ENCODE measurements at regions of chr2 and their contacts with region 1.

Region 1: DNA sequence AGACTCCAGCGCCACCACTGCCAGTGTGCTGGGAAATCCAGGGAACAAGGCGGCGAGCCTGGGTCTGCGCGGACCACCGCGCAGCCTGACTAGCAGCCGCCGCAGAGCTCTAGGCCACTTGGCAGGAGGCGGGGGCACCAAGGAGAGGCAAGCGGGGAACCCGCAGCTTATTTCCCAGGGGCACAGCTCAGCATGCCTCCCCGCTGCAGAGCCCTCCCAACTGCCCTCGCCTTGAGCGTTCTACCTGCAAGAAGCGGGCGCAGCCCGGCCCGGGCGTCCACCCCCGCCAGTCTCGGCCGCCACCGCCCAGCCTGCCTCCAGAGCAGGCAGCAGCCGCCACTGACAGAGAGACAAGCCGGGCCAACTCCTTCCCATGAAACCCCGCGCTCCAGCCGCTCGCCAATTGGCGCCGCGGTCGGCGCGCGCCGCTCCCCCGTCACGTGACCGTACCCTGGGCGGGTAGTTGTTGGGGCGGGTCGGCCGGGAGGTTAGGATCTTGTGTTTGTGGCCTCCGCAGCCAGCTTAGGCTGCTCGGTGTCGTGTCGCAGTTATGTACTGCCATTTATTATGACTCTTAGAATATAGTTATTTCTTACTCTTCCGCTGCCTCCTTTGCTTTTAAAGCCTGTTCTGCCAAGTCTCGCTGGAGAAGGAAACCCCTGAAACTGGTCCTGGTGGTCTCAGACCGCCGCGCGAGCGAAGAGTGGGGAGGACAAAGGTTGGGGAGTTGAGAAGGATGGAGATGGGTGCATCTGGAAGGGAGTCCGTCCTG is at the start of gene LNPK:
- DNase-seq: peak; percentile 91
- H3K4me3 ChIP-seq: peak within 1 kb of the TSS; percentile 58 to 83 (median 79)
- H3K27ac ChIP-seq: peak within 1 kb of the TSS; percentile 10
- H3K4me1 ChIP-seq: peaks cover 17% of the 10 kb centered on the region
- H3K27me3 ChIP-seq: peaks cover 0 to 2% of the 10 kb centered on the region in 2 experiments
- CTCF ChIP-seq: no peak
- POLR2A ChIP-seq: peak; percentile 96
- total RNA-seq, gene LNPK: 11.2 and 11.8 TPM in 2 replicates

Region 2: DNA sequence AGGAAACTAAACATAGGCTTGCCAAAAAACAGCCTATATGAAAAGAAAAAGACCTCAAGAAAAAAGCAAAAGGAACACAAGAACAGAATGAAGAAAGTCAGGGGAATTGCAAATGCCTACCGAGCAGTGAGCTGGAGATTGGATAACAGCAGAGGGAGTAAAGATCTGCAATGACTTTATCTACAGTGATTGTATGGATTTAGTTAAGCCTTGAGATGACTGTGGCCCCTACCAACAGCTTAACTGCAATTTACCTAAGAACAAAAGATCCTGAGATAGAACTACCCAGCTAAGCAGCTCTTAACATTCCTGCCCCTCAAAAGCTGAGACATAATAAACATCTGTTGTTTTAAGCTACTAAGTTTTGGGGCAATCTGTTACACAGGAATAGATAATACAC is 20.6 kb before region 1 on chr2:
- CTCF ChIA-PET with region 1: interaction called, 3 read pairs
- POLR2A ChIA-PET with region 1: no interaction called
- dilution Hi-C with region 1: no loop called
- intact Hi-C with region 1: loop called (anchors 2 kb)
- DNase-seq: no peak
- H3K4me3 ChIP-seq: no peak overlapping the region
- H3K27ac ChIP-seq: no peak overlapping the region
- H3K4me1 ChIP-seq: no peaks in the 10 kb centered on the region
- H3K27me3 ChIP-seq: no peaks in the 10 kb centered on the region
- CTCF ChIP-seq: no peak
- POLR2A ChIP-seq: no peak

Region 3: DNA sequence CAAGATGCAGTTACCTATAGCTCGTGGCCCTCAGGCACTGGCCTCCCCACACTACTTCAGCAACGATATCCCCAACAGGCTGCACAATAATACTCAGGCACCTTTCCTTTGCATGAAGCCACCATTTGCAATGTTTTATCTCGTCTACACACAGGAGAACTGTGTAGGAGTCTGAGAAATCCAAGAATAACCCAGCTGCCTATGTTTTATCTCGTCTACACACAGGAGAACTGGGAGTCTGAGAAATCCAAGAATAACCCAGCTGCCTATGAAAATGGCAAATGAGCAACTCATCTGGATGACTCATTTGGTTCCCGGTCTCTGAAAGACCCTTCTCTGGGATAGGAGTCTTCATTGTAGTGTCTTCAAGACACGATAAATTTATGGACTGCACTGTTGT is 18.3 kb after region 1 on chr2:
- CTCF ChIA-PET with region 1: no interaction called
- POLR2A ChIA-PET with region 1: no interaction called
- dilution Hi-C with region 1: no loop called
- intact Hi-C with region 1: no loop called
- DNase-seq: no peak
- H3K4me3 ChIP-seq: no peak overlapping the region
- H3K27ac ChIP-seq: no peak overlapping the region
- H3K4me1 ChIP-seq: no peaks in the 10 kb centered on the region
- H3K27me3 ChIP-seq: peaks cover 0 to 5% of the 10 kb centered on the region in 2 experiments
- CTCF ChIP-seq: no peak
- POLR2A ChIP-seq: no peak